ENCODE measurements at regions of chr10 and their contacts with region 1.

Region 1: GRCh38 chr10:93376372-93377293 is 105.5 kb downstream of the MYOF start:
- DNase-seq: peak in 8 of 9 donors; percentile 37 to 78 (median 68)
- ATAC-seq: peak; percentile 89
- H3K4me3 ChIP-seq: no peak overlapping the region
- H3K4me3 Mint-ChIP-seq: no peak overlapping the region
- H3K27ac ChIP-seq: no peak overlapping the region
- H3K27ac Mint-ChIP-seq: no peak overlapping the region
- H3K4me1 ChIP-seq: peaks cover 0 to 4% of the 10 kb centered on the region in 2 donors
- H3K4me1 Mint-ChIP-seq: peaks cover 0 to 23% (median 0%) of the 10 kb centered on the region in 7 donors
- H3K27me3 ChIP-seq: no peaks in the 10 kb centered on the region
- H3K27me3 Mint-ChIP-seq: peaks cover 0 to 10% (median 3%) of the 10 kb centered on the region in 5 donors

Region 2: DNA sequence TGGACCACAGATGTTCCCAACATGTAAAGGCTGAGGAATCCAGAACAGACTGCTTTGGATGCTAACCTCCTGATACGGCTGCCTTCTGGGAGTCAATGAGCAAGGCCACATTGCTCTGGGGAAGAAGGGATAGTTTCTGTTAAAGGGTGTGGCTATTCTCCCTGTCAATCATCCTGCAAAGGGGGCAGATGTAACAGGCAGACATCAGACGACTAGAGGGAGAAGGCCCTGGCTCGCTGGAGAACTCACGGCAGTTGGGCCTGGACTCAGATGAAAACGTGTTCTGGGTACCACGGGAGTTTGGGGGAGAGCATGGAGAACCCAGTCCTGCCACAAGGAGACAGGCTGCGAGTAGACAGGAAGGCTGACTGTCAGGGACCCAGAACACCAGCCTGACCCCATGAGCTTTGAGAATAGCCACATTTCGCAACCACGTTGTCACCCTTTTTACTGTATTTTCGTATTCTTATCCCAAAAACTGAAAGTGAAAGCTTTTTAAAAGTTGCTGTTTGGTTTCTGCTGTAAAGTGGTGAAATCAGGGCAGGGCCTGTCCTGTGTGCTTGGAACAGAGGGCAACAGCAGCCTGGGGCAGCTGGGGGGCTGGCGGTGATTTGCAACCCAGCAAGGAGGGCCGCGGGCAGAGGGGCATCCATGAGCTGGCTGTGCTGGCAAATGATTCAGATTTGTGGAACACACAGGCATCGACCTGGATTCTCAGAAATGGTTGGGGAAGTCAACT is 10.2 kb after region 1 on chr10:
- CTCF ChIA-PET with region 1: interaction called, 15 read pairs
- POLR2A ChIA-PET with region 1: interaction called, 3 read pairs
- intact Hi-C with region 1: no loop called
- DNase-seq: no peak
- ATAC-seq: peak; percentile 77
- H3K4me3 ChIP-seq: no peak overlapping the region
- H3K4me3 Mint-ChIP-seq: peak overlapping the region; percentile 26 to 77 (median 40)
- H3K27ac ChIP-seq: no peak overlapping the region
- H3K27ac Mint-ChIP-seq: peak overlapping the region in 8 of 9 donors; percentile 1 to 94 (median 67)
- H3K4me1 ChIP-seq: peaks cover 0 to 14% of the 10 kb centered on the region in 2 donors
- H3K4me1 Mint-ChIP-seq: peaks cover 26 to 42% (median 35%) of the 10 kb centered on the region in 7 donors
- H3K27me3 ChIP-seq: no peaks in the 10 kb centered on the region
- H3K27me3 Mint-ChIP-seq: peaks cover 0 to 10% (median 3%) of the 10 kb centered on the region in 5 donors

Region 3: DNA sequence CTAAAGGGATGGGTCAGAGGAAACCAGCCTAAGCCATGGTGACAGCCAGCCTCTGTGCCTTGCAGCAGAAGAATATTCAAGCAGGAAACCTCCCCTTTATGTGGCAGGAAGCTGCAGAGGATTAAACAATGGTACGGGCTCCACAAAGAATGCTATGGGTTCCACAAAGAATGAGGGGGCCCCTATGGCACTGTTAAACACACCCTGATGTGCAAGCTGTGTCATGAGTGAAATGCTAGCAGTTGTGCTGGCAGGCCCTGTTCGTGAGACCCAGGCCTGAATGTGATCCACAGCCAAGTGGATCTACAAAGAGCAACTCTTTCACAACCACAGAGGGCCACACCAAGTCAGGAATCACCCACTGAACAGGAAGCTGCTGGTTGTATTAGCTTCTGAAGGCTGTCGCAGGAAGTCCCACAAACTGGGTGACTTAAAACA is 36.6 kb after region 1 on chr10:
- CTCF ChIA-PET with region 1: interaction called, 5 read pairs
- POLR2A ChIA-PET with region 1: no interaction called
- intact Hi-C with region 1: loop called (anchors 1 to 2 kb)
- DNase-seq: peak in 8 of 9 donors; percentile 28 to 77 (median 70)
- ATAC-seq: peak; percentile 86
- H3K4me3 ChIP-seq: peak overlapping the region; percentile 7
- H3K4me3 Mint-ChIP-seq: peak overlapping the region; percentile 48 to 81 (median 72)
- H3K27ac ChIP-seq: peak overlapping the region; percentile 4
- H3K27ac Mint-ChIP-seq: peak overlapping the region; percentile 81 to 94 (median 89)
- H3K4me1 ChIP-seq: peaks cover 26 to 66% of the 10 kb centered on the region in 2 donors
- H3K4me1 Mint-ChIP-seq: peaks cover 48 to 83% (median 76%) of the 10 kb centered on the region in 7 donors
- H3K27me3 ChIP-seq: no peaks in the 10 kb centered on the region
- H3K27me3 Mint-ChIP-seq: no peaks in the 10 kb centered on the region

Region 4: GRCh38 chr10:93473796-93474472 is 97.3 kb after region 1 on chr10:
- CTCF ChIA-PET with region 1: interaction called, 309 read pairs
- POLR2A ChIA-PET with region 1: no interaction called
- intact Hi-C with region 1: no loop called
- DNase-seq: no peak
- ATAC-seq: no peak
- H3K4me3 ChIP-seq: no peak overlapping the region
- H3K4me3 Mint-ChIP-seq: no peak overlapping the region
- H3K27ac ChIP-seq: no peak overlapping the region
- H3K27ac Mint-ChIP-seq: no peak overlapping the region
- H3K4me1 ChIP-seq: no peaks in the 10 kb centered on the region
- H3K4me1 Mint-ChIP-seq: peaks cover 0 to 4% (median 0%) of the 10 kb centered on the region in 7 donors
- H3K27me3 ChIP-seq: no peaks in the 10 kb centered on the region
- H3K27me3 Mint-ChIP-seq: peaks cover 0 to 5% (median 0%) of the 10 kb centered on the region in 5 donors

Region 5: DNA sequence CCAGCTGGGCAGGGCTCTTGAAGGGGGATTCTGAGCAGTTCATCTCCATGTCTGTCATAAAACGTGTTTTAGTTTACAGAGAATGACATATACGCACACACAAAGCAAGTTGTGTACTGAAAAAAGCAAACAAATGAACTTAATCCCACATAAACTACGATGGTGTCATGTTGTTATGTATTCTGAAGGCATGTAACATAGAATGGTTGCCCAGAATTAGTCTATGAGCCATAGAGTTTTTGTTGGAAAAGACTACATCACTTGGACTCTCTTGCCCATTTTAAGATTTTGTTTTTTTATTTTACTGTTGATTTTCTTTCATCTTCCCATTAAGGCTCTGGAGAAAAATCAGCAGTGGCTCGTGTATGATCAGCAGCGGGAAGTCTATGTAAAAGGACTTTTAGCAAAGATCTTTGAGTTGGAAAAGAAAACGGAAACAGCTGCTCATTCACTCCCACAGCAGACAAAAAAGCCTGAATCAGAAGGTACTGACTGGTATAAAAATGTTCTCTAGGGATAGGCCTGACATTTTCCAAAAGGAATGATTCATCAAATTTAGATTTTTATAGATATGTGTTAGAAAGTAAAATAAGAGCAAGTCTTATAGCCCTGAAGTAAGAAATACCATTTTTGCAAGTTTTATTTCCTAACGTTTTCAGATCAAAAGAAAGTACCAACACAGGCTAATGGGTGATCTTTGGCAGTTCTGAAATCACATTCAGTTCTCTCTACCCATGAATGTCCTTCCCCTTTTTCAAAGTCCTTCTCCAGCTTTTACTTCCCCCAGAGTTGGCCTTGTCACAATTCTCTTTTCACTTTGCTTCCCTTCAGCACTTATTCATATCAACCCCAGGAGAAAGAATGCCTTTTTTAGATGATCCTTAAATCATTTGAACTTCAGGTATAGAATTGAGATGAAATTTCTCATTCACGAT is 138.7 kb after region 1 on chr10:
- CTCF ChIA-PET with region 1: interaction called, 42 read pairs
- POLR2A ChIA-PET with region 1: no interaction called
- intact Hi-C with region 1: loop called (anchors 1 kb)
- DNase-seq: no peak
- ATAC-seq: peak; percentile 67
- H3K4me3 ChIP-seq: no peak overlapping the region
- H3K4me3 Mint-ChIP-seq: no peak overlapping the region
- H3K27ac ChIP-seq: no peak overlapping the region
- H3K27ac Mint-ChIP-seq: no peak overlapping the region
- H3K4me1 ChIP-seq: no peaks in the 10 kb centered on the region
- H3K4me1 Mint-ChIP-seq: peaks cover 0 to 5% (median 0%) of the 10 kb centered on the region in 7 donors
- H3K27me3 ChIP-seq: no peaks in the 10 kb centered on the region
- H3K27me3 Mint-ChIP-seq: no peaks in the 10 kb centered on the region

Region 6: DNA sequence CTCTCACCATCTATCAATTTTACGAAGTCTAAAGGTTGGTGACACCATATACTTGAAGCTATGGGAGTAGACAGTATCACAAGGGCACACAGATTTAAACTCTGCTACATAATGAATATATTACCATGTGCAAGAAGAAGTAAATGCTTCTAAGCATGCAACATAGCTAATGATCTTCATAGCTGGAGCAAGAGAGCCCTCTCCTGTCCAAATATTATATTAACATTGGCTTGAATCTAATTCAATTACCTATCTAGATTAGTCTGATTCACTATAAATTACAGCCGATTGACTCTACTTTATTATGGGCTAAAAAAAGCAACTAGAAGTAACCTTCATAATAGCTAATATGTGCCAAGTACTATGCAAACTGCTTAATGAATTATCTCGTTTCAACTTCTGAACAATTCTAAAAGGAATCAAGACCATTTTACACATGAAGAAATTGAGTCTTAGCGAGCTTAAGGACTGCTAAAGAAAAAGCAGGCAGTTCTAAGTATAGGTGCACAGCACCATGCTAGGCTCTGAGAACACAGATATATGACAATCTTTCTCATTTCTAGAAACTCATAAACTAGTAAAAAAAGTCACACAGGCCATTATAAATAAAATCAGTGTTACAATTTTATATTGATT is 303.9 kb after region 1 on chr10:
- CTCF ChIA-PET with region 1: no interaction called
- POLR2A ChIA-PET with region 1: no interaction called
- intact Hi-C with region 1: loop called in 1 of 2 experiments (anchors 1 kb)
- DNase-seq: peak in 1 of 9 donors; percentile 6
- ATAC-seq: peak; percentile 49
- H3K4me3 ChIP-seq: no peak overlapping the region
- H3K4me3 Mint-ChIP-seq: no peak overlapping the region
- H3K27ac ChIP-seq: no peak overlapping the region
- H3K27ac Mint-ChIP-seq: no peak overlapping the region
- H3K4me1 ChIP-seq: no peaks in the 10 kb centered on the region
- H3K4me1 Mint-ChIP-seq: peaks cover 0 to 2% (median 0%) of the 10 kb centered on the region in 7 donors
- H3K27me3 ChIP-seq: no peaks in the 10 kb centered on the region
- H3K27me3 Mint-ChIP-seq: no peaks in the 10 kb centered on the region